Activated naive CD4-positive, alpha-beta T cell treated with anti-CD3 and anti-CD28 coated beads for 36 hours (primary cell): ENCODE measurements at regions of chr10 and their contacts with region 1.

Region 1: DNA sequence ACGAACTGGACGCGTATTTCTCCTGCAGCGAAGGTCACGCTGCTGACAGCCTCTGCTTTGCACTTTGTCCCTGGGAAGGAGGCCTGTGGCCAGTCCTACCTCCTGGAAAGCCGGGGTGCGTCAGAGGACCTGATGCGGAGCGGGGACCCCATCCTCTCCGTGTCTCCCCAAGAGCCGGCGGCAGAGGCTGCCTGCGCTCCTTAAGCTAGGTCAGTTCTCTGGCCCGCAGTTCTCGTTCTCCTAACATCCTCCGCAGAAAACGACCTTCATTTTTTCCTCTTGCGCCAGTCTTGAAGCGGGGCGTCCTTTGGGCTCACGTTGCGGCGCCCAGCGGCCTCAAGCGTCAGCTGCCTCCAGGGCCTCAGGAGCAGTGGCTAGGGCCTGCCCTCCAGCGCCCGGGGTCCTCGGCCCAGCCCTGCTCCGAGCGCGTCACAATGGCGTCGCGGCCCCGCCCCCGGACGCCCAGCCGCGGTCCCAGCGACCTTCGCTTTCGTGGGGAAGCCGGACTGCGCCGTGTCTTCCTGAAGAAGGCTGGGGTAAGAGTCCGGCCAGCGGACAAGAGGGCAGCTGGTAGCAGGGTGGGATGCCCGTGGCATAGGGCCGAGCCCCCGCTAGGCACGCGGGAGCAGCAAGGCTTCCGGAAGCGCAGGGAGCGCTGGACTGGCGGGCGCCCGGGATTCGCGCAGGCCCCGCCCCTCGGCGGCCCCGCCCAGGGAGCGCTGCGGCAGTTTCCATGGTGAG is at the start of gene ZNF487:
- DNase-seq: peak; percentile 90
- H3K4me3 Mint-ChIP-seq: peak within 1 kb of the TSS; percentile 84
- H3K27ac Mint-ChIP-seq: peak within 1 kb of the TSS; percentile 87
- H3K4me1 Mint-ChIP-seq: peaks cover 17% of the 10 kb centered on the region
- H3K27me3 Mint-ChIP-seq: no peaks in the 10 kb centered on the region
- total RNA-seq, gene ZNF487: 2.3 to 2.7 TPM

Region 2: DNA sequence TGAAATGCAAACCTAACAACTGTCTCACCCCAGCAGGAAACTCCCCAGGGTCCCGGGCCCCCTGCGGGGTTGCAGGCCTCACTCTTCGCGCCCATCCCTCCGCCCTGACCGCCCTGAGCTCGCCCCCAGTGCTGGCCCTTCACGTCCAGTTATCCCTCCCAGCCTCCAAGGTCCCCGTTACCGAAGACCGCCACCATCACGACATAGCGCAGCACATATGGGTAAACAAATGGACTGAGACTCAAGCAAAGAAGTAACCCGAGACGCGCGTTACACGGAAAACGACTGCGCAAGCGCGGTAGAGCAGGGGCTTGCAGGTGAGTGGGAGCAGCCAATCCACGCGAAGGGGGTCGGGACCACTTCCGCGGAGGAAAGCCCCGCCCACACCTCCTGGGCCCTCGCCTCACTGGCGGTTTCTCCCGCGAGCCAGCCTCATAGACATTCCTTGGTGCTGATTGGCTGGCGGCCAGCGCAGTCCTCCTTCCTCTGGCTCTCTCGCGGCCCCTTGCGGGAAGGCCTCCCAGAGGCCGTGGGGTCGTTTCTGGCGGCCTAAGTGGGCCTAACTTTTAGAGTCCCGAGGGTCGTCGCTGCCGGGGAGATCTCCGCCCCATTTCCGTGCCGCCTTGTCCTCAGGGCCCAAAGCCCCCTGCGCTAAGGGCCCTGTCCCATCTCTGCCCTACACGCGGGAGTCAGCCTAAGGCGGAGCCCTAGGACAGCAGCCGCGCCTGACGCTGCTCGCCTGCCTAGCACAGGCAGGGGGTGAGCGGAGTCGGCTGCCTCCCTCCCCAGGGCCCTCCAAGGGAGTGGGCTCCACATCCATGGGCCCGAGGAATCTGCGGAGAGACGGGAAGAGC is 74.4 kb before region 1 on chr10:
- CTCF ChIA-PET with region 1: no interaction called
- intact Hi-C with region 1: loop called (anchors 1 kb)
- DNase-seq: peak; percentile 98
- H3K4me3 Mint-ChIP-seq: peak overlapping the region; percentile 95
- H3K27ac Mint-ChIP-seq: peak overlapping the region; percentile 96
- H3K4me1 Mint-ChIP-seq: peaks cover 23% of the 10 kb centered on the region
- H3K27me3 Mint-ChIP-seq: no peaks in the 10 kb centered on the region

Region 3: DNA sequence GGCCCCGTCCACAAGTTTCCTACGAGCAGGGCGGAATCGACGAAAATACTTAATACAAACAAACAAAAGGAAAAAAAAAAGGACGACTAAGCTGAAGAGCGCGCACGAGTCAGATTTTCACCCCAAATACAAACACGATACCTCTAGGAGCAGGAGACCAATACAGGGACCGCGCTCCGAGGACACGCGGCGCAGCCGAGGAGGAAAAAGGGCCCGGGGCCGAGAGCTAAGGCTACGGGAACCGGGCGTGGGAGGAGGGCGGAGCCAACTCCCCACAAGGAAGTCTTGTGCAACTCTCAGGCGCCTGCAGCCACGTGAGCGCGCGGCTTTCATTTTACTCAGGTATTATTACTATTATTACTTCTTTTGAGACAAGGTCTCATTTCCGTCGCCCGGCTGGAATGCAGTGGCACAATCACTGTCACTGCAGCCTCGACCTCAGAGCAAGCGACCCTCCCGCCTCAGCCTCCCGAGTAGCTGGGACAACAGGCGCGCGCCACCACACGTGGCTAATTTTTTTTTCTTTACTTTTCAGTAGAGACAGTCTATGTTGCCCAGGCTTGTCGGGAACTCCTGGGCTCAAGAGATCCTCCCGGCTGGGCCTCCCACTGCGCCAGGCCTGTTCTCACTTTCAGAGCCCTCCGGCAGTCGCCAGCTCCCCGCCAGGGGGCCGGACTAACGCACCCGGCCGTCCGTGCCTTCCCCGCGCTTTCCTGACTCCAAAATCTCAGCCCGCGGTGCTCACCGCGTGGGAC is 28.8 kb before region 1 on chr10:
- CTCF ChIA-PET with region 1: no interaction called
- intact Hi-C with region 1: loop called (anchors 1 kb)
- DNase-seq: peak; percentile 94
- H3K4me3 Mint-ChIP-seq: peak overlapping the region; percentile 88
- H3K27ac Mint-ChIP-seq: peak overlapping the region; percentile 96
- H3K4me1 Mint-ChIP-seq: peaks cover 32% of the 10 kb centered on the region
- H3K27me3 Mint-ChIP-seq: no peaks in the 10 kb centered on the region

Region 4: DNA sequence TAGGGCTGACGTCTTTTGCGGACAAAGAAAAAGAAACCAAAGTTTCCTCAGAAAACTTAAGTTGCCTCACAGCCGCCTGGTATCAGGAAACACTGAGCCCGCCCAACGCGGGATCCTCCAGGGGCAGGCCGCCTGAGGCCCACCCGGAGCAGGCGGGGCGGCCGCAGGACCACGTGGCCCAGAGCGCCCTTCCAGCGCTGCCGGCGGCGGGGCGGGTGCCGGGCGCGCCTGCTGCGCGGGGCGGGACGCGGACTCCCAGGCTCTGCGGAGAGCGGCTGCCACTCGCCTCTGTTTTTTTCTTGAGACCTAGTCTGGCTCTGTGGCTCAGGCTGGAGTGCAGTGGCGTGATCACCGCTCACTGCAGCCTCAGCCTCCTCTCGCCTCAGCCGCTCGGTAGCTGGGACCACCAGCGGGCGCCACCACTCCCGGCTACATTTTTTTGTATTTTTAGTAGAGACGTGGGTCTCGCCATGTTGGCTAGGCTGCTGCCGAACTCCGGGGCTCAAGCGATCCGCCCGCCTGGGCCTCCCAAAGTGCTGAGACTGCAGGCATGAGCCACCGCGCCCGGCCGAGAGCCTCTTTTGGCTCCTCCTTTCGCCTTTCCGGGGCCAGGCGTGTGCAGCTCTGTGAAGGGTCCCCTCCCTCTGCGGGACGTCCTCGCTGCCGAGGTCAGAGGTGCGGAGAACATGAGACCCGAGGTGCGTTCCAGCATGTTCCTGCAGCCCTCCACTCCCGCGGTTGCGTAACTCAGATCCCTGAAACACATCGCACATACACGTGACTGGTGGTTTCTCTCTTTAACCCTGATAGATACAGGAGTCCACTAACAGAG is 16.0 kb before region 1 on chr10:
- CTCF ChIA-PET with region 1: interaction called, 7 read pairs
- intact Hi-C with region 1: loop called (anchors 1 kb)
- DNase-seq: peak; percentile 78
- H3K4me3 Mint-ChIP-seq: peak overlapping the region; percentile 87
- H3K27ac Mint-ChIP-seq: peak overlapping the region; percentile 95
- H3K4me1 Mint-ChIP-seq: peaks cover 35% of the 10 kb centered on the region
- H3K27me3 Mint-ChIP-seq: no peaks in the 10 kb centered on the region